CD14-positive monocyte (primary cell): ENCODE measurements at regions of chr1 and their contacts with region 1.

Region 1: GRCh38 chr1:84377480-84378095 is 20.7 kb upstream of the DNASE2B start:
- DNase-seq: no peak
- H3K4me3 ChIP-seq: no peak overlapping the region
- H3K4me3 Mint-ChIP-seq: no peak overlapping the region
- H3K27ac ChIP-seq: no peak overlapping the region
- H3K27ac Mint-ChIP-seq: no peak overlapping the region
- H3K4me1 ChIP-seq: peaks cover 7 to 12% of the 10 kb centered on the region in 2 donors
- H3K4me1 Mint-ChIP-seq: peaks cover 3% of the 10 kb centered on the region
- H3K27me3 ChIP-seq: no peaks in the 10 kb centered on the region
- H3K27me3 Mint-ChIP-seq: peaks cover 0 to 2% (median 0%) of the 10 kb centered on the region in 3 donors
- CTCF ChIP-seq: no peak

Region 2: GRCh38 chr1:84422909-84423308 is 45.3 kb after region 1 on chr1:
- intact Hi-C with region 1: loop called in 1 of 2 experiments (anchors 5 kb)
- DNase-seq: no peak
- H3K4me3 ChIP-seq: no peak overlapping the region
- H3K4me3 Mint-ChIP-seq: no peak overlapping the region
- H3K27ac ChIP-seq: no peak overlapping the region
- H3K27ac Mint-ChIP-seq: no peak overlapping the region
- H3K4me1 ChIP-seq: peaks cover 16 to 17% of the 10 kb centered on the region in 2 donors
- H3K4me1 Mint-ChIP-seq: peaks cover 18% of the 10 kb centered on the region
- H3K27me3 ChIP-seq: no peaks in the 10 kb centered on the region
- H3K27me3 Mint-ChIP-seq: no peaks in the 10 kb centered on the region
- CTCF ChIP-seq: no peak